A549 (cell line): ENCODE measurements at regions of chr4 and their contacts with region 1.

Region 1: DNA sequence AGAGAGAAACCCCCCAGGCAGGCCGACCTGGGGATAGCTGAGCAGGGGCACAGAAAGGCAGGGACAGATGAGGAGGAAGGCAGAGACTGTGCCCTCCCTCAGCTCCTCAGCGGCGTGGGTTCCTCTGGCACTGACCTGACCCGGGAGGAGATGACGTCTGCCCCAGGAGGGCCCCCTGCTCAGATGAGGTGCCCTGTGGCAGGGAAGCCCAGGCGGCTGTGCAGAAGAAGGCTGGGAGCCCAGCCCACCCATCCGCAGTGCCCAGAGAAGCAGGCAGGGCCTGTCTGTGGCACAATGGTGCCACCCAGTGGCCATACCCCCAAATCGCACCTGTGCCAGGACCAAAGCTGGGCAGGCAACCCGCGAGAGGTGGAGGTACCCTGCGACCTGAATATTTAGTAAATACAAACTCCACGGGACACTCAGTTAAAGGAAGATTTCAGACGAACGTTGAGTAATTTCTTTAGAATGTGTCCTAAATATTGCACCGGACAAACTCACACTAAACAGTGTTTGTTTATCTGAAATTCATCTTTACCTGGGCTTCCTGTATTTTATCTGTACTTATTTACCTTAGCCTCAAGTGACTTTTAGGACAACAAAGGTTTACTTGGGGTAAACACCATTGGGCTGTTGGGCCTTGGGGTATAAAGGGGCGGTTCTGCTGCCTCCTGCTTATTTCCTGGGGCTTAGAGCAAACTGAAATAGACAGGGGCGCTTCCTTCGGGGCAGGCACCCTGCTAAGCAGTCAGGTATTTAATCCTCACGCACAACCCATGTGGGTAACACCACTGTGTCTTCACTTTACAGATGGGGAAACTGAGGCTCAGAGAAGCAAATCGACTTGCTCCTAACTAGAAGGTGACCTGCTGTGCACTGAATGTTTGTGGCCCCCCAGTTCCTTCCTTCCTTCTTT is 46.5 kb upstream of the HMX1 start:
- DNase-seq: peak; percentile 41 to 58
- ATAC-seq: peak; percentile 81 to 95
- H3K4me3 ChIP-seq: no peak overlapping the region
- H3K27ac ChIP-seq: no peak overlapping the region
- H3K4me1 ChIP-seq: no peaks in the 10 kb centered on the region
- CTCF ChIP-seq: peak; percentile 73
- EP300 ChIP-seq: no peak
- POLR2A ChIP-seq: no peak
- RAD21 ChIP-seq: peak; percentile 82 to 87

Region 2: GRCh38 chr4:8607603-8608481 is 310.3 kb before region 1 on chr4:
- CTCF ChIA-PET with region 1: interaction called, 52 read pairs
- POLR2A ChIA-PET with region 1: no interaction called
- DNase-seq: peak in 1 of 2 experiments; percentile 50
- ATAC-seq: peak; percentile 50 to 82; a peak in 3 of 6 replicates
- H3K4me3 ChIP-seq: no peak overlapping the region
- H3K27ac ChIP-seq: no peak overlapping the region
- H3K4me1 ChIP-seq: no peaks in the 10 kb centered on the region
- CTCF ChIP-seq: peak; percentile 66
- EP300 ChIP-seq: no peak
- POLR2A ChIP-seq: no peak
- RAD21 ChIP-seq: peak; percentile 54 to 72

Region 3: GRCh38 chr4:8615921-8616785 is 302.0 kb before region 1 on chr4:
- CTCF ChIA-PET with region 1: interaction called, 10 read pairs
- POLR2A ChIA-PET with region 1: no interaction called
- DNase-seq: no peak
- ATAC-seq: no peak
- H3K4me3 ChIP-seq: no peak overlapping the region
- H3K27ac ChIP-seq: no peak overlapping the region
- H3K4me1 ChIP-seq: no peaks in the 10 kb centered on the region
- CTCF ChIP-seq: no peak
- EP300 ChIP-seq: no peak
- POLR2A ChIP-seq: no peak
- RAD21 ChIP-seq: no peak

Region 4: DNA sequence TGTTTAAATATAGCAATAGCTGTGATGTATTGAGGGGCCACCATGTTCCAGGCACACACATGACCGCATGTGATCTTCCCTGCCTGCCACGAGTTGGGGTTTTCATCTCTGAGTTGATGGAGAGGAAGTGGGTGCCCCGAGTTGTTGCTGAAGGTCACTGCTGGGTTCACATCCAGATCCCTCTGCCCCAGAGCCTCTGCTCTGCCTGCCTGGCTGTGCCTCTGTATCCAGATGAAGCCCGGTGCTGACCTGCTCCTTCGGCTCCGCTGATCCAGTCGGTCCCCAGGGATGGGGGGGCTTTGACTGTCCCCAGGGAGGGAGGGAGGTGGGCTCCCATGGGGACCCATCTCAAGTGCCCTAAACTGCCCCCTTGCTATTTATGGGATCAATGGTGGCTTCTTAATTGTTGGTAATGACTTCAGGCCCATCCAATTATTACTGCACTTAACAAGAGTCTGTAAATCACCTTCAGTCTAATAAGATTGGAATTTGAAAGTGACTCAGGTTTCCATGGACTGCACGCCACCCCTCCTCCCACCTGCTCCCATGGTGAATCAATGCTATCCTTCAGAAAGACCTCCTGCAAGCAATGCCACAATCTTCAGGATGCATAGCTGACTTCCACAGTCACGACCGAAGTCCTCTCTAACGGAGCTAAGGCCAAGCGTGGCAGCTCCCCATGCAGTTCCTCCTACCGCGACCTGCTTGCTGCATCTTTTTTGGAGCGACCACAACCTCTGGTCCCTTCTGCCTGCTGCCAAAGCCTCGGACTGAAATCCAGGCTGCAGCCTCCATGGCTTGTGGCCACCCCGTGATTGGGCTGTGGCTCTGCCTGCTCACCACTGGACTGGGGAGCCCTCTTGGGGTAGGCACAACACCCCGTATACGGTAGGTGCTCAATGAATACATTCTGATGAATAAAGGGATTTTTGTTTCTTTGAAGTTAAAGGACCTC is 252.4 kb before region 1 on chr4:
- CTCF ChIA-PET with region 1: interaction called, 10 read pairs
- POLR2A ChIA-PET with region 1: no interaction called
- DNase-seq: no peak
- ATAC-seq: no peak
- H3K4me3 ChIP-seq: no peak overlapping the region
- H3K27ac ChIP-seq: no peak overlapping the region
- H3K4me1 ChIP-seq: no peaks in the 10 kb centered on the region
- CTCF ChIP-seq: no peak
- EP300 ChIP-seq: no peak
- POLR2A ChIP-seq: no peak
- RAD21 ChIP-seq: no peak

Region 5: GRCh38 chr4:8688041-8688937 is 229.8 kb before region 1 on chr4:
- CTCF ChIA-PET with region 1: interaction called, 23 read pairs
- POLR2A ChIA-PET with region 1: no interaction called
- DNase-seq: peak; percentile 34 to 48
- ATAC-seq: peak; percentile 68 to 94
- H3K4me3 ChIP-seq: no peak overlapping the region
- H3K27ac ChIP-seq: no peak overlapping the region
- H3K4me1 ChIP-seq: no peaks in the 10 kb centered on the region
- CTCF ChIP-seq: peak; percentile 48
- EP300 ChIP-seq: no peak
- POLR2A ChIP-seq: no peak
- RAD21 ChIP-seq: peak; percentile 40 to 51; a peak in 3 of 5 replicates

Region 6: DNA sequence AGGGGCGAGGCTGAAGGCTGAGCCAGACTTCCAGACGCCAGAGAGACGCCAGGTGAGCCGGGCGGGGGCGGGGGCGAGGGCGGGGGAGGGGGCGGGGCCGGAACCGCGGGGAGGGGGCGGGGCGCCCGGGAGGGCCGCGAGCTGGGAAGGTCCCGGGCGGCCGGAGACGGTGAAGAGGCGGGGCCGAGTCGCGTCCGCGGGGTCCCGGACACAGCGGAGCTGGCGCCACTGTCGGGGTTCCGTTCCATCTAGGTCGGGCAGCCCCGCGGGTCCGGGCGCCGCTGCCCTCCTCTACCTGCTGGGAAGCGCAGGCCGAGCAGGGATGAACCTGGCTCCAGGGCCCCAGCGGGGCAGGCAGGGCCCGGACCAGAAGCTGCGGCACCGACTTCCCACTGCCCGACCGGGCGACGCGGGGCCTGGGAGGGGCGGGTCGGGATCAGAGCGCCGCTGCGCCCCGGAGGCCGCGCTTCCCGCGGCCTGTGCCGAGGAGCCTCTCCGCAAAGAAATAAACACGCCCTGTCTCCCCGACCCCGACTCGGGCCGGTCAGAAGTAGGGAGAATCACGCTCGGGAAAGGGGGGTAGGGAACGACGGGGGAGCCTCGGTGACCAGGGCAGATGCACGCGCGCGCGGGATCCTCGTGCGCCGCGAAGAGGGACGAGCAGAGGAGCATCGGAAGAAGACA is 57.1 kb before region 1 on chr4:
- CTCF ChIA-PET with region 1: no interaction called
- POLR2A ChIA-PET with region 1: no interaction called
- DNase-seq: no peak
- ATAC-seq: peak in 1 of 2 experiments; percentile 18; a peak in 2 of 6 replicates
- H3K4me3 ChIP-seq: peak overlapping the region; percentile 32; the same call in 2 of the 3 replicates
- H3K27ac ChIP-seq: no peak overlapping the region
- H3K4me1 ChIP-seq: peaks cover 19% of the 10 kb centered on the region; the same call in 1 of the 3 replicates
- CTCF ChIP-seq: no peak
- EP300 ChIP-seq: no peak
- POLR2A ChIP-seq: no peak
- RAD21 ChIP-seq: no peak

Region 7: GRCh38 chr4:8939840-8940742 is 22.0 kb after region 1 on chr4:
- CTCF ChIA-PET with region 1: interaction called, 10 read pairs
- POLR2A ChIA-PET with region 1: no interaction called
- DNase-seq: no peak
- ATAC-seq: no peak
- H3K4me3 ChIP-seq: no peak overlapping the region
- H3K27ac ChIP-seq: no peak overlapping the region
- H3K4me1 ChIP-seq: no peaks in the 10 kb centered on the region
- CTCF ChIP-seq: no peak
- EP300 ChIP-seq: no peak
- POLR2A ChIP-seq: no peak
- RAD21 ChIP-seq: no peak